ENCODE measurements at regions of chr3 and their contacts with region 1.

Region 1: DNA sequence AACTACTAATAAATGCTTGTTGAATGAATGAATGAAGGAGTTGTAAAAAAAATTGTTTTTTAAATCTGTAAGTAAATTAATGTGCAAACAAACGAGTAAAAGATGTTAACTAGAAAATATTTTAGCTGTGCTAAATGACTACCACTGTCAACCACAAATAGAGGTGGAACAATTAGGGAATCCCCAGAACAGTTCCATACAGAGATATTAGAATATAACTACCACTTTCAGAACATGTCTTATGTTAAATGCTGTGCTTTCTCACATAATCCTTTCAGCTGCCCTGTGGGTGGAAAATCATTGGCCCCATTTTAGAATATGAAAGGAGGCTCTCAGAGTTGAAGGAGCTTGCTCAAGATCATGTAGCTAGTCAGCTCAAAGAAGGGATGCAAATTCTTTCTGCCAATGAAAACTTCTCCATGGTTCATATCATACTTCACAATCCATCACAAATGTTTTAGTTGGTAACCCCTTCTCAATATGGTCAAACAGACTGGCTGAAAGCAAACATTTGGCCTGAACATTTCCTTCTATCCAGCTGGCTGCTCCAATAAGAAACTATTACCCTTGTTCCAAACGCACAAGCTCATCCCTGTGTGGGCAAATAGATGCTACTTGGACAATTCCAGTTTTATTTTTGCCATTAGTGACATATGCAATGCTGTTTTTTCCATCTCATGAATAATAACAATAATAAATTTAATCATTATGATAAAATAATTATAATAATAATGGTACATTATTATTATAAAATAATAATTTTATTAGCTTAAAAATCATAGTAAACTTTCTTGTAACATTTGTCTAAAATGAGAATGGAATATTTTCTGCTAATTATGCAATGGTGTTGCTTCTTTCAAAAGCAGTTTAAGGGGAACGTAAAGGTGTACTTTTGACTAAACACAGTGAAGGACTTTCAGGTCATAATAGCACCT is 290.4 kb upstream of the STT3B start:
- DNase-seq: no peak
- ATAC-seq: no peak
- H3K4me3 ChIP-seq: no peak overlapping the region
- H3K27ac ChIP-seq: no peak overlapping the region
- H3K4me1 ChIP-seq: no peaks in the 10 kb centered on the region
- H3K27me3 ChIP-seq: peaks cover 6% of the 10 kb centered on the region; the same call in 1 of the 2 replicates
- CTCF ChIP-seq: no peak
- POLR2A ChIP-seq: no peak
- RAD21 ChIP-seq: no peak

Region 2: GRCh38 chr3:31288641-31289100 is 46.4 kb after region 1 on chr3:
- CTCF ChIA-PET with region 1: no interaction called
- POLR2A ChIA-PET with region 1: no interaction called
- dilution Hi-C with region 1: no loop called
- in situ Hi-C with region 1: no loop called
- intact Hi-C with region 1: loop called (anchors 1 kb)
- DNase-seq: peak; percentile 60
- ATAC-seq: peak; percentile 81
- H3K4me3 ChIP-seq: no peak overlapping the region
- H3K27ac ChIP-seq: no peak overlapping the region
- H3K4me1 ChIP-seq: no peaks in the 10 kb centered on the region
- H3K27me3 ChIP-seq: peaks cover 1% of the 10 kb centered on the region; the same call in 1 of the 2 replicates
- CTCF ChIP-seq: no peak
- POLR2A ChIP-seq: no peak
- RAD21 ChIP-seq: no peak

Region 3: GRCh38 chr3:31505371-31506048 is 263.2 kb after region 1 on chr3:
- CTCF ChIA-PET with region 1: no interaction called
- POLR2A ChIA-PET with region 1: interaction called, 10 read pairs
- dilution Hi-C with region 1: no loop called
- in situ Hi-C with region 1: no loop called
- intact Hi-C with region 1: no loop called
- DNase-seq: no peak
- ATAC-seq: no peak
- H3K4me3 ChIP-seq: no peak overlapping the region
- H3K27ac ChIP-seq: no peak overlapping the region
- H3K4me1 ChIP-seq: no peaks in the 10 kb centered on the region
- H3K27me3 ChIP-seq: peaks cover 13% of the 10 kb centered on the region
- CTCF ChIP-seq: no peak
- POLR2A ChIP-seq: no peak
- RAD21 ChIP-seq: no peak

Measured in IMR-90 (cell line).